CD4-positive, alpha-beta T cell (primary cell): ENCODE measurements at regions of chr1 and their contacts with region 1.

Region 1: GRCh38 chr1:114757455-114758250 is at the start of gene CSDE1:
- DNase-seq: peak; percentile 94 to 99 (median 96)
- ATAC-seq: peak; percentile 81
- H3K4me3 ChIP-seq: peak within 1 kb of the TSS; percentile 84
- H3K4me3 Mint-ChIP-seq: peak within 1 kb of the TSS; percentile 99
- H3K27ac ChIP-seq: peak within 1 kb of the TSS; percentile 99 to 100
- H3K27ac Mint-ChIP-seq: peak within 1 kb of the TSS; percentile 98
- H3K4me1 ChIP-seq: peaks cover 26% of the 10 kb centered on the region
- H3K4me1 Mint-ChIP-seq: peaks cover 58% of the 10 kb centered on the region
- H3K27me3 ChIP-seq: no peaks in the 10 kb centered on the region
- H3K27me3 Mint-ChIP-seq: no peaks in the 10 kb centered on the region
- CTCF ChIP-seq: no peak
- total RNA-seq, gene CSDE1: 725 to 731 TPM

Region 2: GRCh38 chr1:114320586-114320985 is 437.1 kb before region 1 on chr1:
- CTCF ChIA-PET with region 1: no interaction called
- POLR2A ChIA-PET with region 1: no interaction called
- intact Hi-C with region 1: no loop called
- DNase-seq: no peak
- ATAC-seq: no peak
- H3K4me3 ChIP-seq: no peak overlapping the region
- H3K4me3 Mint-ChIP-seq: no peak overlapping the region
- H3K27ac ChIP-seq: no peak overlapping the region
- H3K27ac Mint-ChIP-seq: no peak overlapping the region
- H3K4me1 ChIP-seq: no peaks in the 10 kb centered on the region
- H3K4me1 Mint-ChIP-seq: peaks cover 5% of the 10 kb centered on the region
- H3K27me3 ChIP-seq: no peaks in the 10 kb centered on the region
- H3K27me3 Mint-ChIP-seq: no peaks in the 10 kb centered on the region
- CTCF ChIP-seq: no peak

Region 3: GRCh38 chr1:114581335-114582287 is 176.0 kb before region 1 on chr1 and contains the start of gene BCAS2:
- CTCF ChIA-PET with region 1: no interaction called
- POLR2A ChIA-PET with region 1: interaction called, 8 read pairs
- intact Hi-C with region 1: loop called in 1 of 2 experiments (anchors 1 kb)
- DNase-seq: peak; percentile 88 to 99 (median 92)
- ATAC-seq: peak; percentile 92
- H3K4me3 ChIP-seq: peak within 1 kb of the TSS; percentile 86
- H3K4me3 Mint-ChIP-seq: peak within 1 kb of the TSS; percentile 95
- H3K27ac ChIP-seq: peak within 1 kb of the TSS; percentile 82 to 97
- H3K27ac Mint-ChIP-seq: peak within 1 kb of the TSS; percentile 97
- H3K4me1 ChIP-seq: peaks cover 26% of the 10 kb centered on the region
- H3K4me1 Mint-ChIP-seq: peaks cover 48% of the 10 kb centered on the region
- H3K27me3 ChIP-seq: no peaks in the 10 kb centered on the region
- H3K27me3 Mint-ChIP-seq: no peaks in the 10 kb centered on the region
- CTCF ChIP-seq: no peak
- total RNA-seq, gene BCAS2: 109 to 111 TPM

Region 4: GRCh38 chr1:114670083-114671010 is 87.3 kb before region 1 on chr1:
- CTCF ChIA-PET with region 1: no interaction called
- POLR2A ChIA-PET with region 1: interaction called, 3 read pairs
- intact Hi-C with region 1: loop called in 1 of 2 experiments (anchors 5 kb)
- DNase-seq: peak; percentile 74 to 93 (median 84)
- ATAC-seq: peak; percentile 94
- H3K4me3 ChIP-seq: peak overlapping the region; percentile 81
- H3K4me3 Mint-ChIP-seq: peak overlapping the region; percentile 99
- H3K27ac ChIP-seq: no peak overlapping the region
- H3K27ac Mint-ChIP-seq: peak overlapping the region; percentile 77
- H3K4me1 ChIP-seq: peaks cover 14% of the 10 kb centered on the region
- H3K4me1 Mint-ChIP-seq: peaks cover 12% of the 10 kb centered on the region
- H3K27me3 ChIP-seq: peaks cover 5 to 8% of the 10 kb centered on the region in 2 experiments
- H3K27me3 Mint-ChIP-seq: peaks cover 28% of the 10 kb centered on the region
- CTCF ChIP-seq: no peak

Region 5: DNA sequence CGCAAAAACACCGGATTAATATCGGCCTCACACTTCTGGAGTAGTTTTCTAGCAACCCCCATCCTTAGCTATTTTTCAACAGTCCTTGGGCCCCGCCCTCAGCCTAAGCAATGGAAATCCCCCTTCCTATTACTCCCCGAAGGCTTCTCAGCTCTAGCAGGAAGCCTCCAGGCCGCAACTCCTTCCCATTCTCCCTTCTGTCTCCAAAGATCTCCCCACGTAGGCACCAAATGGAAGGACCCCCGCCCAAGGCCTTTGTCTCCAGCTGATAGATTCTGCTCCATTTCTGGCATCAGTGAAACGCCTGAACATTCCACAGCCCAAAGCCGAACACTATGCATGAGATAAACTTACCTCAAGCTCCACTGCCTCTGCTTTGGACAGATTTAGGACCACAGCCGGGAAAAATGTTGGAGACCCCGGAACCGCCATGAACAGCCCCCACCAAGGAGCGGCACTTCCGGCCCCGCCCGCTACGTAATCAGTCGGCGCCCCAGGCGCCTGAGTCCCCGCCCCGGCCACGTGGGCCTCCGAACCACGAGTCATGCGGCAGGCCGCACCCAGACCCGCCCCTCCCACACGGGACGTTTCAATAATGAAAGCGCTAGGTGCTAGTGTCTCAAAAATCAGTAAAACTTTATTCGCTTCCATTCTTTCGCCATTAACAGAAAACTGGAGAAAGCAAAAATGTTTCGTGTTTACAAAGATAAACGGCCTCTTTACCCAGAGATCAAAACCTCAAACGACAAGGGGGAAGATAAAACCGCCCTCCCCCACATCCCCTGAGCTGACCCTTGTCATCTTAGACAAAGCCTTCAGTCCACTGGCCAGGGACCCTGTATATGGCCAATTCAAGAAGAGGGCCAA is 41.1 kb before region 1 on chr1 and contains the start of gene NRAS:
- CTCF ChIA-PET with region 1: no interaction called
- POLR2A ChIA-PET with region 1: interaction called, 31 read pairs
- intact Hi-C with region 1: loop called (anchors 1 kb)
- DNase-seq: peak; percentile 87 to 97 (median 94)
- ATAC-seq: peak; percentile 96
- H3K4me3 ChIP-seq: peak within 1 kb of the TSS; percentile 72
- H3K4me3 Mint-ChIP-seq: peak within 1 kb of the TSS; percentile 91
- H3K27ac ChIP-seq: peak within 1 kb of the TSS; percentile 83 to 96
- H3K27ac Mint-ChIP-seq: peak within 1 kb of the TSS; percentile 98
- H3K4me1 ChIP-seq: peaks cover 16% of the 10 kb centered on the region
- H3K4me1 Mint-ChIP-seq: peaks cover 21% of the 10 kb centered on the region
- H3K27me3 ChIP-seq: no peaks in the 10 kb centered on the region
- H3K27me3 Mint-ChIP-seq: no peaks in the 10 kb centered on the region
- CTCF ChIP-seq: no peak
- total RNA-seq, gene NRAS: 28.9 to 30.4 TPM

Region 6: DNA sequence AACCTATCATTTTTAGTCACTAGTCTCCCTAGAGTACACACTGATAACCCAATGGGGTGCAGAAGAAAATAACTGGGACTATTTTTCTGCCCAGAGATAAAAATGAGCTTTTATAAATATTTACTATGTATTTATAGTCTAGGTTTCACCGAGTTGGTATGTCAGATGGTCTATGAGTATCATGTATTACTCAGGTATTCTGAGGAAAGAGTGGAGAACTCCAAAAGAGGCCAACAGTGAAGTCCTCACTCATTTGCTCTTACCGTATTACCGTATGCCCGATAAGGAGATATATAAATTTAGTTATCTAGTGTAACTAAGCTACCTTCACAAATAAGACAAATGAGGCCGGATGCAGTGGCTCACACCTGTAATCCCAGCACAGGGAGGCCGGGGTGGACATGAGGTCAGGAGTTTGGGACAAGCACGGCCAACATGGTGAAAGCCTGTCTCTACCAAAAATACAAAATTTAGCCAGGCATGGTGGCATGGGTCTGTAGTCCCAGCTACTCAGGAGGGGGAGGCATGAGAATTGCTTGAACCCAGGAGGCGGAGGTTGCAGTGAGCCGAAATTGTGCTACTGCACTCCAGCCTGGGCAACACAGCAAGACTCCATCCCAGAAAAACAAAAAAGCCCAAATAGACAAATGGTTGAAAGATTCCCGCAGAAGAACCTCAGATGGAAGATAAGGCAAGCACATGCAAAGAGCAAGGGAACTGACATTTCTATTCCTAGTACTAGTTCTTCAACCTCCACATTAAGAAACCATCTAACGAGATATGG is 15.5 kb before region 1 on chr1:
- CTCF ChIA-PET with region 1: interaction called, 3 read pairs
- POLR2A ChIA-PET with region 1: interaction called, 8 read pairs
- intact Hi-C with region 1: loop called in 1 of 2 experiments (anchors 2 kb)
- DNase-seq: no peak
- ATAC-seq: no peak
- H3K4me3 ChIP-seq: no peak overlapping the region
- H3K4me3 Mint-ChIP-seq: no peak overlapping the region
- H3K27ac ChIP-seq: no peak overlapping the region
- H3K27ac Mint-ChIP-seq: no peak overlapping the region
- H3K4me1 ChIP-seq: peaks cover 7% of the 10 kb centered on the region
- H3K4me1 Mint-ChIP-seq: peaks cover 75% of the 10 kb centered on the region
- H3K27me3 ChIP-seq: no peaks in the 10 kb centered on the region
- H3K27me3 Mint-ChIP-seq: no peaks in the 10 kb centered on the region
- CTCF ChIP-seq: no peak

Region 7: DNA sequence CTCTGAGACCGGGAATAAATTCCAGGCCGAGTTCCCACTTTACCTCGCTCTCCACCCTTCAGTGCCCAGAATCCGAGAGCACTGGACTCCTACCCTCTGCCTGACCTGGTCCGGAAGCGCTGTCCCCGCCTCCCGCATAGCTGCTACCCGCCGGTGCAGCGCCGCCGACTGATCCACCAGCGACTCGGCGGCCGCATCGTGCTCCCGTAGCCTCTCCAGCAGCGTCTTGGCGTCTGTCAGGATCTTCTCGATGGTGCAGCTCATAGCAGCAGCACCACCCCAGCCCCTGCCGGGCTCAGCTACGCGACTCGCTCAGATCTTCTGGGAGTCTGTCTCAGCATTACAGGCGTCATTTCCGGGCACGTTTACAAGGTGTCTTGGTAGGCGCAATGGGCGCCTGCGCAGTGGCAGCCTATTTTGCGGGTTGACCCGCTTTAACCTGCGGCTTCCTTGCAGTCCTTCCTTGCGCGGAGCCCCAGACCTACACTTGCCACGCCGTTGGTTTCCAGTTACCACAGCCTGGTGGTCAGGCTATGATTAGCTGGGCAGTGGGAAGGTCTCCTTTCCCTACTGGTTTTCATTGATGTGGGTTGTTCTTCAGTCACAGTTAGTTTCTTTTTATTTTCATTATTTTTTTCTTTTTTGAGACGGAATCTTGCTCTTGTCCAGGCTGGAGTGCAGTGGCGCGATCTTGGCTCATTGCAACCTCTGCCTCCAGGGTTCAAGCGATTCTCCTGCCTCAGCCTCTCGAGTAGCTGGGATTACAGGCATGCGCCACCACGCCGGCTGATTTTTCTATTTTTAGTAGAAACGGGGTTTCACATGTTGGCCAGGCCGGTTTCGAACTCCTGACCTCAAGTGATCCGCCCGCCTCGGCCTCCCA is 22.9 kb after region 1 on chr1 and contains the start of gene SIKE1:
- CTCF ChIA-PET with region 1: interaction called, 5 read pairs
- POLR2A ChIA-PET with region 1: interaction called, 39 read pairs
- intact Hi-C with region 1: loop called (anchors 1 kb)
- DNase-seq: peak; percentile 87 to 98 (median 92)
- ATAC-seq: peak; percentile 98
- H3K4me3 ChIP-seq: peak within 1 kb of the TSS; percentile 84
- H3K4me3 Mint-ChIP-seq: peak within 1 kb of the TSS; percentile 100
- H3K27ac ChIP-seq: peak within 1 kb of the TSS; percentile 88 to 90
- H3K27ac Mint-ChIP-seq: peak within 1 kb of the TSS; percentile 96
- H3K4me1 ChIP-seq: peaks cover 11% of the 10 kb centered on the region
- H3K4me1 Mint-ChIP-seq: peaks cover 36% of the 10 kb centered on the region
- H3K27me3 ChIP-seq: no peaks in the 10 kb centered on the region
- H3K27me3 Mint-ChIP-seq: no peaks in the 10 kb centered on the region
- CTCF ChIP-seq: no peak
- total RNA-seq, gene SIKE1: 69.8 to 75.3 TPM

Region 8: GRCh38 chr1:115062542-115063011 is 304.9 kb after region 1 on chr1:
- CTCF ChIA-PET with region 1: no interaction called
- POLR2A ChIA-PET with region 1: no interaction called
- intact Hi-C with region 1: loop called in 1 of 2 experiments (anchors 10 kb)
- DNase-seq: peak; percentile 90 to 98 (median 94)
- ATAC-seq: peak; percentile 89
- H3K4me3 ChIP-seq: no peak overlapping the region
- H3K4me3 Mint-ChIP-seq: peak overlapping the region; percentile 77
- H3K27ac ChIP-seq: peak overlapping the region; percentile 83 to 89
- H3K27ac Mint-ChIP-seq: peak overlapping the region; percentile 99
- H3K4me1 ChIP-seq: peaks cover 35% of the 10 kb centered on the region
- H3K4me1 Mint-ChIP-seq: peaks cover 44% of the 10 kb centered on the region
- H3K27me3 ChIP-seq: no peaks in the 10 kb centered on the region
- H3K27me3 Mint-ChIP-seq: no peaks in the 10 kb centered on the region
- CTCF ChIP-seq: no peak